Endothelial cell of umbilical vein (primary cell): ENCODE measurements at regions of chr1 and their contacts with region 1.

Region 1: DNA sequence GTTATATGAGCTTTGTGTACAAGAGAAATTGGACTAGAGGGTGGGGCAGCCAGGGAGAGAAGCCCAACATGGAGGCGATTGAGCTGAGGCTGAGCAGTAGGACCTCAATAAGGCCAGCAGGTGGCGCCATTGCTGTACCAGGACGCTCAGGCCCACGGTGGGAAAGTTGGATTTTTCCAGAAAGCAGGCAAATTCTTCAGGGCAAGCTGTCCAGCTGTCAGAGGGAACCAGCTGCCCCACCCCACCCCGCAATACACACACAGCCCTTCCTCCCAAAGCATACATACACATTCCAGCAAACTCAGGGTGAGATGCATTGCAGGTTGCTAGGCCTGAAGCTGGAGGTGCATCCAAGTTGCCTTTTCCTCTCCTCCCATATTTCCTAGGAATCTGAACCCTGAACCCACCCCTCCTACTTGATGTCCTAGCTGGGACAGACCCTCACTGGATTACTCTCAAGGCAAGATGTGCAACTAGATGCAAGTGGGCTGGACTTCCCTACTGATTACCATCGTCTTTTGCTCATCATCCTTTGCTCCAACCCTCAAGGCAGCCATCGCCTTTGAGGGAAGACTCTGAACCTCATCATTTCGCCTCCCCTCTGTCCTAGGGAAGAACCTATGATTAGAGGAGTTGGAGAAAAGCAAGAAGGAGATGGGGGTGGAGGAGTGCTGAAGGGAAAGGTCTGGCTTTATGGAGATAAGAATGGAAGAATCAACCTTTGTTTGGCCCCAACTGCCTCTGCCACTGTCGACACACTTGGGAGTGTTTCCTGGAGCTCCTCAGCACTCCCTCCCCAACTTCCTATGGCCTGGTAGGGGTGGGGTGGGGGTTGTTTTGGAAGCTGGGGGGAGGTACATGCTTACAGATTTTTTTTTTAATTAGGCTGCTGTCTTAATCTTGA is 25.5 kb downstream of the CD34 start:
- DNase-seq: peak; percentile 94
- H3K4me3 ChIP-seq: no peak overlapping the region
- H3K27ac ChIP-seq: peak overlapping the region; percentile 53
- H3K4me1 ChIP-seq: peaks cover 44% of the 10 kb centered on the region
- H3K27me3 ChIP-seq: no peaks in the 10 kb centered on the region
- CTCF ChIP-seq: peak; percentile 93
- POLR2A ChIP-seq: no peak

Region 2: DNA sequence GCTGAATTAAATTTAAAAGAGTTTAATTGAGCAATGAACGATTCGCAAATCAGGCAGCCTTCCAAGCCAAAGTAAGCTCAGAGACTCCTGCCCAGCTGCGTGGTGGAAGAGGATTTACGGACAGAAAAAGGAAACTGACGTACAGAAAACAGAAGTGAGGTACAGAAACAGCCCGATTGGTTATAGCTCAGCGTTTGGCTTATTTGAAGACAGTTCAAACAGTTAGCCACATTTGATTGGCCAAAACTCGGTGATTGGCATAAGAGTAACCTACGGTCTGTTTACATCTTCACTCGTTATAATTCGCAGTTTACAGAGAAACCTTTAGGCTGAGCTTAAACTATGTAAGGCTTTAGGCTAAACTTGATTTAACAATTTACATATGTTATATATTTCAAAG is 193.5 kb before region 1 on chr1:
- CTCF ChIA-PET with region 1: no interaction called
- POLR2A ChIA-PET with region 1: no interaction called
- dilution Hi-C with region 1: no loop called
- intact Hi-C with region 1: no loop called
- DNase-seq: no peak
- H3K4me3 ChIP-seq: no peak overlapping the region
- H3K27ac ChIP-seq: no peak overlapping the region
- H3K4me1 ChIP-seq: no peaks in the 10 kb centered on the region
- H3K27me3 ChIP-seq: peaks cover 5 to 17% of the 10 kb centered on the region in 2 experiments
- CTCF ChIP-seq: no peak
- POLR2A ChIP-seq: no peak

Region 3: DNA sequence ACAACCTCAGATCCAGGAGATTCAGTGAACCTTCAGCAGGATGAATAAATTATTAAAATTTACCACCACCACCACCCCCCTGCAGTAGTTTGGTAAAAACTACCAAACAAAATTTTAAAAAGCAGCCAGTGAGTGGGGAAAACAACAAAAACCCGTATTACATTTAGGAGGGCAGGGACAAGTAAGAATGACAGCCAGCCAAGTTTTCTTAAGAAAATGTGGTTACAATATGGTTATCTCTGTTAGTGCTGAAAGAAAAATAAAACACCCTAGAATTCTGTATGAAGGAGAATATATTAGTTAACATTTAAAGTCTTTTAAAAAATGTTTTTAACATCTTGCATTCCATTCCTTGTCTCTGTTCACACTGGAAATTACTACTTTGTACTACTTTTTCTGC is 118.8 kb before region 1 on chr1:
- CTCF ChIA-PET with region 1: no interaction called
- POLR2A ChIA-PET with region 1: no interaction called
- dilution Hi-C with region 1: no loop called
- intact Hi-C with region 1: no loop called
- DNase-seq: no peak
- H3K4me3 ChIP-seq: no peak overlapping the region
- H3K27ac ChIP-seq: no peak overlapping the region
- H3K4me1 ChIP-seq: no peaks in the 10 kb centered on the region
- H3K27me3 ChIP-seq: no peaks in the 10 kb centered on the region
- CTCF ChIP-seq: no peak
- POLR2A ChIP-seq: no peak

Region 4: GRCh38 chr1:207791291-207791690 is 94.1 kb before region 1 on chr1:
- CTCF ChIA-PET with region 1: no interaction called
- POLR2A ChIA-PET with region 1: no interaction called
- dilution Hi-C with region 1: no loop called
- intact Hi-C with region 1: no loop called
- DNase-seq: no peak
- H3K4me3 ChIP-seq: no peak overlapping the region
- H3K27ac ChIP-seq: no peak overlapping the region
- H3K4me1 ChIP-seq: no peaks in the 10 kb centered on the region
- H3K27me3 ChIP-seq: no peaks in the 10 kb centered on the region
- CTCF ChIP-seq: no peak
- POLR2A ChIP-seq: no peak

Region 5: GRCh38 chr1:207868774-207869721 is 16.3 kb before region 1 on chr1:
- CTCF ChIA-PET with region 1: interaction called, 132 read pairs
- POLR2A ChIA-PET with region 1: no interaction called
- dilution Hi-C with region 1: no loop called
- intact Hi-C with region 1: no loop called
- DNase-seq: peak; percentile 83
- H3K4me3 ChIP-seq: peak overlapping the region; percentile 64 to 67 (median 65)
- H3K27ac ChIP-seq: peak overlapping the region; percentile 52
- H3K4me1 ChIP-seq: peaks cover 17% of the 10 kb centered on the region
- H3K27me3 ChIP-seq: no peaks in the 10 kb centered on the region
- CTCF ChIP-seq: peak; percentile 73 to 95
- POLR2A ChIP-seq: peak; percentile 59

Region 6: GRCh38 chr1:207925210-207925609 is 39.8 kb after region 1 on chr1:
- CTCF ChIA-PET with region 1: interaction called, 22 read pairs
- POLR2A ChIA-PET with region 1: no interaction called
- dilution Hi-C with region 1: no loop called
- intact Hi-C with region 1: loop called (anchors 1 kb)
- DNase-seq: peak; percentile 88
- H3K4me3 ChIP-seq: no peak overlapping the region
- H3K27ac ChIP-seq: no peak overlapping the region
- H3K4me1 ChIP-seq: peaks cover 33% of the 10 kb centered on the region
- H3K27me3 ChIP-seq: no peaks in the 10 kb centered on the region
- CTCF ChIP-seq: no peak
- POLR2A ChIP-seq: no peak

Region 7: DNA sequence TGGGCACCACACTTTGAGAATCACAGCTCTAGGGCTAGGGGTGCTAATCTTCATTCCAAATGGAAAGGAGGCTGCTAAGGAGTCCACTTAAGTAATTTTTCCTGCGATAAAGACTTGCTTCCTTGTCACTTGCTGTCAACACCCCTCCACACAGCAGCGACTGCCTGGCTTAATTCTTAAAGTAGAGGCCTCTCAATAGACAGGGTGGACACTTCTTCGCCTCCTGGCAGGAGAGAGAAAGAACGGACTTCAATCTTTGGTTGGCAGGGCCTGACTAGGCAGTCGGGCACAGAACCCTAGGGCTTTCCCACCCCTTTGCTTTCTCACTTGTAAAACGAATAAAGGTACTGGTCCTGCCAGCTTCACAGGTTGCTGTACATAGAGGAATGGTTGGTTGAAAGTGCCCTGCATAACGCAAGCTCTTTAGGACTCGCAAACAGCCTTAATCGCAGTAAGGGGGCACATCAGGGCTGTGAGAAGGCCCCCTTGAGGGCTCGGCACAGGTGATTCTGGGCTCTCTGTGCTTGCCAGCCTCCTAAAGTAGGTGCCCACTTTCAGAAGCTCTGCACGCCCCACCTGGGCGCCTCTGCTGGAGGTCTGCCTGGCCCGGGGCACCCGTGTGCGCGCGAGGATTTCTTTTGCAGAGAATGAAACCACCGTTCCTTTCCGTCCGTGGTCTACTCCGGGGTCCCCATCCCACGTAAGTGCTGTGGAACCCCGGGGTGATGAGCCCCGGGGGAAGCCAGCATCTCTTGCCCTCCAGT is 73.2 kb after region 1 on chr1:
- CTCF ChIA-PET with region 1: interaction called, 321 read pairs
- POLR2A ChIA-PET with region 1: interaction called, 20 read pairs
- dilution Hi-C with region 1: no loop called
- intact Hi-C with region 1: loop called (anchors 1 kb)
- DNase-seq: no peak
- H3K4me3 ChIP-seq: peak overlapping the region in 1 of 3 experiments; percentile 16
- H3K27ac ChIP-seq: no peak overlapping the region
- H3K4me1 ChIP-seq: peaks cover 24% of the 10 kb centered on the region
- H3K27me3 ChIP-seq: no peaks in the 10 kb centered on the region
- CTCF ChIP-seq: no peak
- POLR2A ChIP-seq: no peak

Region 8: DNA sequence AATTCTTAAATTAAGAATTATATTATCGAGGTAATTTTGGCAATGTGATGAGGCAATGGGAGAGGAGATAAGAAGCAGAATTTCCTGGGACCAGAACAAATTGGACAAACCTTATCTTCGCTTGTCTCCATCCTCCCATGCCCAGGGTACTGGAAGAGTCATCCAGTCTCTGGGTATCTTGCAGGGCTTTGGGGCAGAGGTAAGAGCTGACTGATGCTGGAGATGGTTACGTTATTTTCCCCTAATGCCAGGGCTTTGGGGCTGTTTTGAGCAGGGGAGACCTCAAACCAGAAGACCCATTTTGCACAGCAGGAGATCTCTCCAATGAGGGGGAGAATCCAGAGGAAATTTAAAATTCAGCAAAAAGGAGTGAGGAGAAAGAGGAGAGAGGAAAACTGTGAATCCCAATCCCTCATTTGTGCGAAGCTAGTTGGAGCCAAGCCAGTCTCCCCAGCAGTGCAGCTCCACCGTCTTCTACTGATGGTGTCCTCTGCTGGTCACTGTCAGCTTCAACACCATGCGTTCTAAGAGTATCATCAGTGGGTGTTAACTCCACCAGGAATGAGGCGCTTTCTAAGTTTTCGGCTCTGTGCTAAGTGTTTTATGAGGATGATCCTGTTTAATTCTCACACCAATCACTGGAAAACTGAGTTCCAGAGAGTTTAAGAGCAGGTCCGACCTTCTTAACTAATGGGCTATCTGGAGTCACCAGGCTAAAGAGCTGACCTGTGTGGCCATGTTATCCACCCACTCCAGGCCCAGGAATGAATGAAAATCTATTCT is 112.3 kb after region 1 on chr1:
- CTCF ChIA-PET with region 1: interaction called, 139 read pairs
- POLR2A ChIA-PET with region 1: no interaction called
- dilution Hi-C with region 1: no loop called
- intact Hi-C with region 1: loop called (anchors 1 kb)
- DNase-seq: peak; percentile 75
- H3K4me3 ChIP-seq: no peak overlapping the region
- H3K27ac ChIP-seq: no peak overlapping the region
- H3K4me1 ChIP-seq: no peaks in the 10 kb centered on the region
- H3K27me3 ChIP-seq: peaks cover 14 to 29% of the 10 kb centered on the region in 2 experiments
- CTCF ChIP-seq: peak; percentile 89 to 92
- POLR2A ChIP-seq: no peak

Region 9: DNA sequence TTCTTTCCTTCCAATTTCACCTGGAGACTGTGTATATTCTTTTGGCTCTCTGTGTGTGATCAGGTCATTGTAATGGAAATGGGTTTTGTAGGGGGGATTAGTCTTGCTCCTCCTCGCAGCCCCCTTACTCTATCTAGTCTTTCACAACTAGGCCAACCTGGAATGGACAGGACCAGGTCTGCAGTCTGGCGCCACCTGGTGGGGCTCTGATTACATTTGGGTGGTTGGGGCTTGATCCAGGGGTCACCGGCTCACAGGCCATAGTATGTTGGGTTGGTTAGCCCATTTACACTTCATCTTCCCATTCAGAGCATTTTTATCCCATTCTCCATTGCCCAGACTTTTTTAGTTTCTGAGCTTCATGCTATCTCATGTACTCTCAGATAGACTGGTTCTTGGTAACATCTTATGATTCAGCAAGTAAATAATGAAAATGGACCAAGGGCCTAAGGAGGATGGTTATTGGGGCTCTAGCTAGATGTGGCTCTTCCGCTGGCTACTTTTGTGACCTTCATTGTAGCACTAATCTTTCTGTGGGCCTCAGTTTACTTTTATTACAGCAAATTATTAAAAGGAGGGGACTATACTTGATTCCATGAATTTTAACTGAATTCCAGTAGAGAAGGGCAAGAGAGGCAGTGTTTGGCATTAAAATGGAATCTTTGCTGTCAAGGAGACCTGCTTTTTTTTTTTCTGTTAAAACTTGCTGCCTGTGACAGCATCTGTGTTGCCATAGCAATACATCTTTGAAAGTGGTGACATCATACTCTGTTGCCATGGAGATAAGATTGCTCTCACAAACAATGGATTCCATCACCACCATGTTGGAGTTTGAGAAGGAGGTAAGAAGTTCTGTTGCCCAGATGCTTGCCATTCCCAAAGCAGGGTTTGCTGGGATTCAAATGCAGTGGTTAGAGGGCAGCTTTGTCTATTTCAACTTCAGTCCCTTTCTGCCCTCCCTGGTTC is 208.7 kb after region 1 on chr1:
- CTCF ChIA-PET with region 1: interaction called, 6 read pairs
- POLR2A ChIA-PET with region 1: no interaction called
- dilution Hi-C with region 1: no loop called
- intact Hi-C with region 1: loop called (anchors 1 kb)
- DNase-seq: peak; percentile 57
- H3K4me3 ChIP-seq: no peak overlapping the region
- H3K27ac ChIP-seq: peak overlapping the region; percentile 63
- H3K4me1 ChIP-seq: no peaks in the 10 kb centered on the region
- H3K27me3 ChIP-seq: no peaks in the 10 kb centered on the region
- CTCF ChIP-seq: peak; percentile 80 to 82
- POLR2A ChIP-seq: no peak

Region 10: DNA sequence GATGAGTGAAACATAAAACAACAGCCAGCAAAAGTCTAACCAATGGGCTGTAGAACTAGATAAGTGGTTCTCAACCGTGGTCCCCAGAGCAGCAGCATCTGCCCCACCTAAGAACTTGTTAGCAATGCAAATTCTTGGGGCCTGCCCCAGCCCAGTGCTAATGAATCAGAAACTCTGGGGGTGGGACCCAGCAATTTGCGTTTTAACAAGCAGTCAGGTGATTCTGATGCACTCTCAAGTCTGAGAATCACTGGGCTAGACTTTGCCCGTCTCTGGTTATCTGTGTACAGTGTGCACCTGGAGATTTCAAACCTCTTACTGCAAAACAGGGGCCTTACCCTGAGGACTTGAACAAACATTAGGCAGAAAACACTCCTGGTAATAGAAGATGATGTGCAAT is 292.3 kb after region 1 on chr1:
- CTCF ChIA-PET with region 1: no interaction called
- POLR2A ChIA-PET with region 1: no interaction called
- dilution Hi-C with region 1: no loop called
- intact Hi-C with region 1: no loop called
- DNase-seq: no peak
- H3K4me3 ChIP-seq: no peak overlapping the region
- H3K27ac ChIP-seq: no peak overlapping the region
- H3K4me1 ChIP-seq: peaks cover 65% of the 10 kb centered on the region
- H3K27me3 ChIP-seq: no peaks in the 10 kb centered on the region
- CTCF ChIP-seq: no peak
- POLR2A ChIP-seq: no peak

Region 11: GRCh38 chr1:208245185-208245705 is 359.9 kb after region 1 on chr1:
- CTCF ChIA-PET with region 1: interaction called, 9 read pairs
- POLR2A ChIA-PET with region 1: no interaction called
- dilution Hi-C with region 1: no loop called
- intact Hi-C with region 1: loop called (anchors 1 kb)
- DNase-seq: peak; percentile 92
- H3K4me3 ChIP-seq: peak overlapping the region in 1 of 3 experiments; percentile 40
- H3K27ac ChIP-seq: peak overlapping the region; percentile 70
- H3K4me1 ChIP-seq: peaks cover 23% of the 10 kb centered on the region
- H3K27me3 ChIP-seq: peaks cover 0 to 2% of the 10 kb centered on the region in 2 experiments
- CTCF ChIP-seq: peak; percentile 69 to 76
- POLR2A ChIP-seq: no peak